ENCODE measurements at regions of chr12 and their contacts with region 1.

Region 1: DNA sequence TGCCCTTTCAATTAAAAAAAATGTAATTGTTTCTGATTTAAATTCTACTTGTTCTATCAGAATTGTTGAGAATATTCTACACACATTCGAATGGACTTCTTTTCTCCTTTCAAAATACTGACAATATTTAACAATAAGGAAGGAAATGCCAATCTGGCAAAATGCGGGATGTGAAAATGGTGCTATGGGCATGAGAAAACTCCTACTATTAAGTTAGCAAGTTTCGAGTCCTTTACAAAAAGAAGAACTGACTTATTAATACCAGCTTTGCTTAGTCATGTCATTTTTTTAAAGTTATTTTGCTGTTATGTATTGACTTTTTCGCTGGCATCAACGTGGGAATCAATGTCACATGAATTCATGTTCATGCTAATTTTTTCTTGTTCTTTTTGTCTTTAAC is 31.7 kb upstream of the ARL1 start:
- DNase-seq: no peak
- ATAC-seq: no peak
- H3K4me3 Mint-ChIP-seq: no peak overlapping the region
- H3K27ac Mint-ChIP-seq: no peak overlapping the region
- H3K4me1 Mint-ChIP-seq: no peaks in the 10 kb centered on the region
- H3K27me3 Mint-ChIP-seq: peaks cover 2% of the 10 kb centered on the region
- CTCF ChIP-seq: no peak

Region 2: DNA sequence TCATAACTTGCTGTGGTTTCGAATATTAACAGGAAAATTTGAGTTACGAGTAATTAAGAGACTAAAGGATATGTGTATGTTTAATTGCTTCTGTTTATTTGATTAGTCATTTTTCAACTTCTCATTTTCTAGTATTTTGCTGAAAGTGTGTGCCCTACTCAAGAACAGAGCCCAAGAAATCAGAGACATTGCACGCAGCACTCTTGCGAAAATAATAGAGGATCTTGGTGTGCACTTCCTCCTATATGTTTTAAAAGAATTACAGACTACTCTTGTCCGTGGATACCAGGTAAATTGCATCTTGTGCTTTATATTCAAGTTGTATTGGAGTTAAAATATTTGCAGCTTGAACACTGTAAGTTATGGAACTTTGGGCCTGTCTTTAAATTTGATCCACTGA is 82.4 kb before region 1 on chr12:
- CTCF ChIA-PET with region 1: no interaction called
- POLR2A ChIA-PET with region 1: no interaction called
- intact Hi-C with region 1: no loop called
- DNase-seq: no peak
- ATAC-seq: no peak
- H3K4me3 Mint-ChIP-seq: no peak overlapping the region
- H3K27ac Mint-ChIP-seq: no peak overlapping the region
- H3K4me1 Mint-ChIP-seq: no peaks in the 10 kb centered on the region
- H3K27me3 Mint-ChIP-seq: no peaks in the 10 kb centered on the region
- CTCF ChIP-seq: no peak

Region 3: GRCh38 chr12:101962486-101962885 is 523.2 kb after region 1 on chr12:
- CTCF ChIA-PET with region 1: no interaction called
- POLR2A ChIA-PET with region 1: interaction called, 11 read pairs
- intact Hi-C with region 1: no loop called
- DNase-seq: no peak
- ATAC-seq: no peak
- H3K4me3 Mint-ChIP-seq: no peak overlapping the region
- H3K27ac Mint-ChIP-seq: no peak overlapping the region
- H3K4me1 Mint-ChIP-seq: peaks cover 3% of the 10 kb centered on the region
- H3K27me3 Mint-ChIP-seq: no peaks in the 10 kb centered on the region
- CTCF ChIP-seq: no peak